ENCODE measurements at regions of chr5 and their contacts with region 1.

Region 1: DNA sequence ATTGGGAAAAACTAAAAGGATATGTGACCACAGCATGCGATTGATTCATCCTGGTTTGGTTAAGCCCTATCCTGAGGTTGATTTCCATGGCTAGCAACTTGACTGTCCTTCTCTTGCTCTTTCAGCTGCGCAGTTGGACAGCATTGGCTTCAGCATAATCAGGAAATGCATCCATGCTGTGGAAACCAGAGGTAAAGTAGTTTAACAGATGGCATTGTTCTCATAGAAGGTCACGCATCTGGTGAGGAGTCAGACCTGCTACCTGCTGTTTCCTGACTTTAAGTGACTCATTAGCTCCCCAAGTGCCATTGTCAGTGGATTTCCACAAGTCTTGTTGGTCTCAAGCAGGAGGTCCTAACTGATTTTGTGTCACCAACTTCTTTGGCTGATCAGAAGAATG is 266.9 kb downstream of the ARHGAP26 start:
- DNase-seq: no peak
- H3K4me3 Mint-ChIP-seq: no peak overlapping the region
- H3K27ac Mint-ChIP-seq: peak overlapping the region; percentile 86
- H3K4me1 Mint-ChIP-seq: peaks cover 47% of the 10 kb centered on the region
- H3K27me3 Mint-ChIP-seq: no peaks in the 10 kb centered on the region

Region 2: GRCh38 chr5:143051244-143052058 is 14.4 kb after region 1 on chr5:
- intact Hi-C with region 1: loop called (anchors 1 kb)
- DNase-seq: no peak
- H3K4me3 Mint-ChIP-seq: no peak overlapping the region
- H3K27ac Mint-ChIP-seq: peak overlapping the region; percentile 70
- H3K4me1 Mint-ChIP-seq: peaks cover 62% of the 10 kb centered on the region
- H3K27me3 Mint-ChIP-seq: no peaks in the 10 kb centered on the region

Region 3: DNA sequence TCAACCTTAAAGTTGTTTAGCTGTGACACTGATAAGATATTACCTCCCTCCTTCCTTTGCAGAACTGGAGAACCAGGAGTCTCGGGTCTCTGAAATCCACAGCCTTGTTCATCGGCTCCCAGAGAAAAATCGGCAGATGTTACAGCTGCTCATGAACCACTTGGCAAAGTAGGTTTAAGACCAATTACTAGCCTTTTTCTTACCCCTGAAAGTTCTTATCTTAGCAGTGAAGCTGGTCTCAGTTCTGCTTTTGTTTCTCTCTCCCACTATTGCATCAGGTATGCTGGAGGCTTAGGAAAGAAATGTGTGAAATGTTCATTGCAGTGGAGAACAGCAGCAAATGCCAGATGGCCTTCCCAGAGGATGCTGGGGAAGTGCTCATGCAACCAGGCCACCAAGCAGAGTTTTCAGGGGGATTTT is 20.5 kb after region 1 on chr5:
- intact Hi-C with region 1: loop called (anchors 1 kb)
- DNase-seq: no peak
- H3K4me3 Mint-ChIP-seq: no peak overlapping the region
- H3K27ac Mint-ChIP-seq: peak overlapping the region; percentile 95
- H3K4me1 Mint-ChIP-seq: peaks cover 62% of the 10 kb centered on the region
- H3K27me3 Mint-ChIP-seq: no peaks in the 10 kb centered on the region

Region 4: GRCh38 chr5:143153332-143154119 is 116.5 kb after region 1 on chr5:
- intact Hi-C with region 1: no loop called
- DNase-seq: no peak
- H3K4me3 Mint-ChIP-seq: no peak overlapping the region
- H3K27ac Mint-ChIP-seq: no peak overlapping the region
- H3K4me1 Mint-ChIP-seq: peaks cover 2% of the 10 kb centered on the region
- H3K27me3 Mint-ChIP-seq: no peaks in the 10 kb centered on the region